ENCODE measurements at regions of chr1 and their contacts with region 1.

Region 1: GRCh38 chr1:39098546-39099250 is 72.5 kb downstream of the NDUFS5 start:
- DNase-seq: peak; percentile 30
- ATAC-seq: peak; percentile 22
- H3K4me3 Mint-ChIP-seq: no peak overlapping the region
- H3K27ac Mint-ChIP-seq: no peak overlapping the region
- H3K4me1 Mint-ChIP-seq: peaks cover 26% of the 10 kb centered on the region
- H3K27me3 Mint-ChIP-seq: no peaks in the 10 kb centered on the region
- CTCF ChIP-seq: no peak

Region 2: DNA sequence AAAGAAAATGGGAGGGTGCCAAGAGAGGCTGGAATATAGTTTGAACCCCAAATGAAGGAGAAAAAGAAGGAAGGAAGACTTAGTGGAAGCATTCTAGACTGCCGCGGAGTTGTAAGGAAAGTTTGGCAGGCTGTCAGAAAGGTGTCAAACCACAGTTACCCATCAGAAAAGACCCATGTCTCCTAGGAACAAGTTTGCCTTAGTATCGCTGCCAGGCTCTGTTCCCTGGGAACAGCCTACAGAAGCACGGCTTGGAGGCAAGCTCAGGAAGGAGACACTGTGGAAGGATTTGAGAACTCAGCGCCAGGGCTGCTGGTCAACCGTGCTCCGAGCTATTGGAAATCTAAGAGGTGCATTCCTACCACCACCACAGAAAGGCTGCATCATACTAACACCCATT is 436.6 kb before region 1 on chr1:
- CTCF ChIA-PET with region 1: no interaction called
- POLR2A ChIA-PET with region 1: no interaction called
- intact Hi-C with region 1: no loop called
- DNase-seq: no peak
- ATAC-seq: no peak
- H3K4me3 Mint-ChIP-seq: no peak overlapping the region
- H3K27ac Mint-ChIP-seq: no peak overlapping the region
- H3K4me1 Mint-ChIP-seq: no peaks in the 10 kb centered on the region
- H3K27me3 Mint-ChIP-seq: peaks cover 29% of the 10 kb centered on the region
- CTCF ChIP-seq: no peak

Region 3: GRCh38 chr1:38724160-38725131 is 374.3 kb before region 1 on chr1:
- CTCF ChIA-PET with region 1: no interaction called
- POLR2A ChIA-PET with region 1: no interaction called
- intact Hi-C with region 1: no loop called
- DNase-seq: no peak
- ATAC-seq: no peak
- H3K4me3 Mint-ChIP-seq: no peak overlapping the region
- H3K27ac Mint-ChIP-seq: no peak overlapping the region
- H3K4me1 Mint-ChIP-seq: no peaks in the 10 kb centered on the region
- H3K27me3 Mint-ChIP-seq: peaks cover 67% of the 10 kb centered on the region
- CTCF ChIP-seq: no peak

Region 4: GRCh38 chr1:38990738-38991639 is 107.7 kb before region 1 on chr1 and contains the start of gene AKIRIN1:
- CTCF ChIA-PET with region 1: no interaction called
- POLR2A ChIA-PET with region 1: no interaction called
- intact Hi-C with region 1: loop called (anchors 5 kb)
- DNase-seq: peak; percentile 100
- ATAC-seq: peak; percentile 92
- H3K4me3 Mint-ChIP-seq: peak within 1 kb of the TSS; percentile 91
- H3K27ac Mint-ChIP-seq: peak within 1 kb of the TSS; percentile 92
- H3K4me1 Mint-ChIP-seq: peaks cover 30% of the 10 kb centered on the region
- H3K27me3 Mint-ChIP-seq: no peaks in the 10 kb centered on the region
- CTCF ChIP-seq: no peak
- total RNA-seq, gene AKIRIN1: 53.3 and 57.3 TPM in 2 replicates

Region 5: DNA sequence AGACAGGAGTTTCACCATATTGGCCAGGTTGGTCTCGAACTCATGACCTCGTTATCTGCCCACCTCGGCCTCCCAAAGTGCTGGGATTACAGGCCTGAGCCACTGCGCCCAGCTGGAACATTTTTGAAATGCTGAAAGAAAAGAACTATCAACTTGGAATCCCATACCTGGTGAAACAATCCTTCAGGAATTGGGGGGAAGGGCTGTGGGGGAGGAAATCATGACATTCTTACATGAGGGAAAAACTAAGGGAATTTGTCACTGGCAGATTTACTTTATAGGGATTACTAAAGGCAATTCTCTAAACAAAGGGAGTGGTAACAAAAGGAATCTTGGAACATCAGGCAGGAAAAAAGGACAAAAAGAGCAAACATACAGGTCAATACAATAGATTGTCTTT is 46.7 kb before region 1 on chr1:
- CTCF ChIA-PET with region 1: no interaction called
- POLR2A ChIA-PET with region 1: no interaction called
- intact Hi-C with region 1: no loop called
- DNase-seq: no peak
- ATAC-seq: no peak
- H3K4me3 Mint-ChIP-seq: no peak overlapping the region
- H3K27ac Mint-ChIP-seq: no peak overlapping the region
- H3K4me1 Mint-ChIP-seq: peaks cover 25% of the 10 kb centered on the region
- H3K27me3 Mint-ChIP-seq: no peaks in the 10 kb centered on the region
- CTCF ChIP-seq: no peak

Region 6: DNA sequence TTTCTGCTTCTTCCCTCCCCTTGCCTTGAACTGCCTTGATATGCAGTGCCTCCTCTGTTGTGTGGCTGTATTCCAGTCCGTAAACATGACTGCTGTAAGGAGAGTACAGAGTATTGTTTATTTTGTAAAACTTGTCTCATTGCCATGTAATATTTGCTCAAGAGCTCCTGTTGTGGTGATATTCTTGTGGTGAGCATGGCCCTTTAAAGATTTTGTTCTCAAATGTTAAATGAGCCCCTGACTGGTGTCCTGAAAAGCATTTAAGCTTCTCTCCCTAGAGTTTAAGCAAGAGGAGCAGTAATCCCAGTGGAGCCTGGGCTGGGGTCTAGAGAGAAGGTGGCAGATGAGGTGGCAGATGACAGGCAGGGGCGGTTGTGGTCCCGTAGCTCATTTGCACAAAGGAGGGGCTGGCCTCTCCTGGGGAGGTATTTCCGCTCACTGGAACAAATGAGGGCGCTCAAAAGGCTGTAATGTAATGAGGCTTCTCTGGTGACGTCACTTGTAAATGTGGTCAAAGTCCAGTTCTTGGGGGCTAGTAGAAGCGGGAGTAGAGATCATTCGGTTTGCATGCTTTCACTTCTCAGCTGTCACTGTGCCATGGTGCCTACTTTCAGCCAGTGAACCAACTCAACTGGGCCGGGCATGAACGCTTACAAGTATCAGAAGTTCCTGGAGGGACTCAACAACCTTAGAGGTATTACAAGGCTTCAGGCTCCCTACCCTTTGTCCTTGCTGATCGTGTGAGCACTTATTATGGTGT is 59.8 kb after region 1 on chr1:
- CTCF ChIA-PET with region 1: no interaction called
- POLR2A ChIA-PET with region 1: no interaction called
- intact Hi-C with region 1: no loop called
- DNase-seq: no peak
- ATAC-seq: no peak
- H3K4me3 Mint-ChIP-seq: no peak overlapping the region
- H3K27ac Mint-ChIP-seq: no peak overlapping the region
- H3K4me1 Mint-ChIP-seq: peaks cover 2% of the 10 kb centered on the region
- H3K27me3 Mint-ChIP-seq: no peaks in the 10 kb centered on the region
- CTCF ChIP-seq: no peak

Region 7: DNA sequence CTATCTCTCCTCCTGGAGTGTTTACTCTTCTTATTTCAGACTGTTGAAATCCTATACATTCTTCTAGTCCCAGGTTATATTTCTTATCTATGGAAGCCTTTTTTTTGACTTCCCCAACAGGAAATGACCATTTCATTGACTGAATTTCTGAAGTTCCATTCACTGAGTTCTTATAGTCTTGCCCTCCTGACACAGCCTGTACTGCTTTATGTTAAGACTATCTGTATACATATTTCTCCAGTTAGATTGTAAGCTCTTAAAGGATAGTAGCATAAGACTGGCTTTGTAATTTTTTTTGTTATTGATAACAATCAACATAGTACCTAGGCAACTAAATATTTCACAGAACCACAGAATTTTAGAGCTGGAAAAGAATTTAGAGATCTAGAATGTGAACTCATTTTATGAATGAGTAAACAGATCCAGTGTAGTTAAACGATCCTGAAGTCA is 90.9 kb after region 1 on chr1:
- CTCF ChIA-PET with region 1: interaction called, 86 read pairs
- POLR2A ChIA-PET with region 1: interaction called, 14 read pairs
- intact Hi-C with region 1: loop called (anchors 1 kb)
- DNase-seq: no peak
- ATAC-seq: no peak
- H3K4me3 Mint-ChIP-seq: no peak overlapping the region
- H3K27ac Mint-ChIP-seq: no peak overlapping the region
- H3K4me1 Mint-ChIP-seq: peaks cover 67% of the 10 kb centered on the region
- H3K27me3 Mint-ChIP-seq: no peaks in the 10 kb centered on the region
- CTCF ChIP-seq: no peak

Region 8: GRCh38 chr1:39258146-39258924 is 159.6 kb after region 1 on chr1:
- CTCF ChIA-PET with region 1: interaction called, 109 read pairs
- POLR2A ChIA-PET with region 1: no interaction called
- intact Hi-C with region 1: loop called (anchors 1 kb)
- DNase-seq: peak; percentile 32
- ATAC-seq: peak; percentile 70
- H3K4me3 Mint-ChIP-seq: no peak overlapping the region
- H3K27ac Mint-ChIP-seq: peak overlapping the region; percentile 11
- H3K4me1 Mint-ChIP-seq: peaks cover 32% of the 10 kb centered on the region
- H3K27me3 Mint-ChIP-seq: no peaks in the 10 kb centered on the region
- CTCF ChIP-seq: peak; percentile 55

Region 9: DNA sequence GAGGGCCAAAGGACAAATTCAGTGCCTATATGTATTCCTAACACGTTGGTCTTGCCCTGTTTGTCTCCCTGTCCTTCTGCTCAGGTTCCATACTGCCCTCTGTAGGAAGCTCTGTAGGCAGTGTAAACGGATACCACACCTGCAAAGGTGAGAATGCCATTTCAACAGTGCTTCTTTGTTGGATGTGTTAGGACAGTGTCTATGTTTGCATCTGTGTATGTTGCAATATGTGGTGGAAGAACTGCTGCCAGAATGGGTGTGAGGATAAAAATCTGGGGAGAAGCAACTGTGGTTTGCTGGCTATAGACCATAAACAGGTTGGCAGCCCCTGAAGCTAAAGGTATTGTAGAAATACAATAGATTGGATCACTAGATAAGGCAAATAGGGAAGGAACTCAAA is 279.7 kb after region 1 on chr1:
- CTCF ChIA-PET with region 1: interaction called, 7 read pairs
- POLR2A ChIA-PET with region 1: interaction called, 10 read pairs
- intact Hi-C with region 1: loop called (anchors 1 kb)
- DNase-seq: no peak
- ATAC-seq: no peak
- H3K4me3 Mint-ChIP-seq: no peak overlapping the region
- H3K27ac Mint-ChIP-seq: no peak overlapping the region
- H3K4me1 Mint-ChIP-seq: no peaks in the 10 kb centered on the region
- H3K27me3 Mint-ChIP-seq: no peaks in the 10 kb centered on the region
- CTCF ChIP-seq: no peak

Region 10: GRCh38 chr1:39538588-39539465 is 440.1 kb after region 1 on chr1:
- CTCF ChIA-PET with region 1: interaction called, 17 read pairs
- POLR2A ChIA-PET with region 1: no interaction called
- intact Hi-C with region 1: loop called (anchors 1 kb)
- DNase-seq: peak; percentile 38
- ATAC-seq: peak; percentile 80
- H3K4me3 Mint-ChIP-seq: no peak overlapping the region
- H3K27ac Mint-ChIP-seq: no peak overlapping the region
- H3K4me1 Mint-ChIP-seq: peaks cover 17% of the 10 kb centered on the region
- H3K27me3 Mint-ChIP-seq: no peaks in the 10 kb centered on the region
- CTCF ChIP-seq: no peak

Measured in activated B cell treated with CpG ODN at 0.5 μM for 24 hours (primary cell).